Activated CD4-positive, alpha-beta memory T cell treated with anti-CD3 and anti-CD28 coated beads, Interleukin-2, amount 10 ng/mL, durations not matched to agents 7 days and 5 days (primary cell): ENCODE measurements at regions of chr10 and their contacts with region 1.

Region 1: GRCh38 chr10:67697724-67698131 is 1.7 kb upstream of the CTNNA3 start:
- DNase-seq: peak; percentile 18
- H3K4me3 Mint-ChIP-seq: no peak overlapping the region
- H3K27ac Mint-ChIP-seq: no peak overlapping the region
- H3K4me1 Mint-ChIP-seq: peaks cover 12% of the 10 kb centered on the region
- H3K27me3 Mint-ChIP-seq: peaks cover 36% of the 10 kb centered on the region

Region 2: GRCh38 chr10:67492317-67493019 is 205.3 kb before region 1 on chr10:
- CTCF ChIA-PET with region 1: no interaction called
- POLR2A ChIA-PET with region 1: no interaction called
- DNase-seq: no peak
- H3K4me3 Mint-ChIP-seq: no peak overlapping the region
- H3K27ac Mint-ChIP-seq: no peak overlapping the region
- H3K4me1 Mint-ChIP-seq: no peaks in the 10 kb centered on the region
- H3K27me3 Mint-ChIP-seq: no peaks in the 10 kb centered on the region

Region 3: DNA sequence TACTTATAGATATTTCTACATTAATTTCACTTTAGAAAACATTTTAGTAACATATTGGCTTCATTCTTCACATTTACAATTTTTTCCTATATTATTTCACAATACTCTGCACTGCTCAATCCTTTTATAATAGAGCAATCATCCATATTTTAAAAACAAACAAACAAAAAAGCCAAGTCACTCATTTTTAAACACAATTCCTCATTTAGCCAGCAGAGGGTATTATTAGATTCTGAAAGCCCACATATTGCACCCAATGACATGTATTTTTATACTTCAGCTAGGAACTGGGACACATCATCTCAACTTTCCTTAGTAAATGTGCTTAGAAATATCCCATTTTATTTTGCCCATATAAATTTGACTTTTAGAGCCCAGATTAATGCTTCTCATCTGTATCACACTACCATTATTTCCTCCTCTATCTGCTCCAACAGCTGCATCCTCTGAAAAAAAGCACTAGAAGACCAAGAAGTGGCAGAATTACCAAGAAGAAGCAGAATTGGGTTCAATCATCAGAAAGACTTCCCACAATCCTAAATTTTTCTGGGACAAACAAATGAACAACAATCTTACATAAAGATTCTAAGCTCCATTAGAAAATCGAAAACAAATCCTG is 31.2 kb before region 1 on chr10:
- CTCF ChIA-PET with region 1: interaction called, 11 read pairs
- POLR2A ChIA-PET with region 1: interaction called, 3 read pairs
- DNase-seq: no peak
- H3K4me3 Mint-ChIP-seq: no peak overlapping the region
- H3K27ac Mint-ChIP-seq: no peak overlapping the region
- H3K4me1 Mint-ChIP-seq: no peaks in the 10 kb centered on the region
- H3K27me3 Mint-ChIP-seq: no peaks in the 10 kb centered on the region

Region 4: DNA sequence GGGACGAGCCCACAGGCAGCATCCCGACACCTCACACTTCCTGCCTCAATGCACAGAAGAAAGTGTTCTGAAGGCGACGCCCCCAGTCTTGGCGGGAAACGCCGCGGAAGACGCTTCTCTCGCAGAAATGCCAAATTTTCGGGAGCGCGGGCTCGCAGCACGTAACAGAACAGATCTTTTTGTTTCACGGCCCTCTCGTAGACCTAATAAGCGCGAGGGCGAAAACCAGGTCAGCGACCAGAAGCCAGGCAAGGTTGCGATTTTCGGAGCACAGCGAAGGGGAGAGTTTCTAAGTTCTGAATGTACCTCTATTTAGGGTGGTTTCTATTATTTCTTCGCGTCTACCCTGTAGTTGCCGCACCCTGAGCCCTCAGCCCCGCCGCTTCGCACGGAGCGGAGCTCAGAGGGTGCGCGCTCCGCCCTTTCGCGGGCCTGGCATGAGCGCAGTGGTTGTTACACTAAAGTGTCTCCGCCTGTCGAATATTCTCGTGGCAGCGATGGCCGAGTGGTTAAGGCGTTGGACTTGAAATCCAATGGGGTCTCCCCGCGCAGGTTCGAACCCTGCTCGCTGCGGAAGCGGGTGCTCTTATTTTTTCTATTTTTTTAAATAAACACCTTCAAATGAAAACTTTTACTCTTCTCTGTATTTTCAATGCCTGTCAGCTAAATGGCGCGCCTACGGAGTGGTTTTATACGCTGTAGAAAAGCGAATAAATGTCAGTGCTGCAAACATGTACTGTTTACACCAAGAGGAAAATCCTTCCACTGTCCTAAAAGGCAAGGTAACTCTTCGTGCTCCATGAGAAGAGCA is 66.5 kb after region 1 on chr10:
- CTCF ChIA-PET with region 1: interaction called, 13 read pairs
- POLR2A ChIA-PET with region 1: interaction called, 8 read pairs
- DNase-seq: peak; percentile 97
- H3K4me3 Mint-ChIP-seq: peak overlapping the region; percentile 72
- H3K27ac Mint-ChIP-seq: peak overlapping the region; percentile 88
- H3K4me1 Mint-ChIP-seq: peaks cover 21% of the 10 kb centered on the region
- H3K27me3 Mint-ChIP-seq: peaks cover 2% of the 10 kb centered on the region

Region 5: DNA sequence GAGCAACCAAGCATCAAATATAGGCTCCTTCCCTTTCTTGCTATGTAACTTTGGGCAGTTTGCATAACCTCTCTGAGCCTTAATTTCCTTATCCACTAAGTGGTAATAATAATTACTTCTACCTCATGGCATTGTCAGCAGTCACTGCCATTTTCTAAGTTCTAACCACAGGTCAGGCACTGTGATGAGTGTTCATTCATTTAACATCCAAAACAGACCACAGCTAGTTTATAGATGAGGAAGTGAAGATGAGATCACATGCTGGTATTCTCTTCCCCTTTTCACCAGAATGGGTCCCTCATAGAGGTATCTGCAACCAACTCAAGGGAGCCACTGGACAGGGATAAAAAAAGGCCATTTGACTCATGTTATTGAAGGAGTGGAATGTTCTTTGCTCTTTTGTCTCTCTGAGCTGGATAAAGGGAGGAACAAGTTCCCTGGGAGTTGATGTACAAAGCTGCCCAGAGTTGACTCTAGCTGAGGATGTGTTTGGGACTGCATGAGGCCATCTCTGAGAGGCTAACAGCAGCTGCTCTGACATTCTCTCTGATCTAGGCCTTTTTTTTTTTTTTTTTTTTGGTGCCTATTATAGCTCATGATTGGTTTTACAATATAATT is 75.3 kb after region 1 on chr10:
- CTCF ChIA-PET with region 1: interaction called, 179 read pairs
- POLR2A ChIA-PET with region 1: interaction called, 4 read pairs
- DNase-seq: no peak
- H3K4me3 Mint-ChIP-seq: no peak overlapping the region
- H3K27ac Mint-ChIP-seq: no peak overlapping the region
- H3K4me1 Mint-ChIP-seq: peaks cover 48% of the 10 kb centered on the region
- H3K27me3 Mint-ChIP-seq: peaks cover 1% of the 10 kb centered on the region

Region 6: GRCh38 chr10:67779465-67780203 is 81.9 kb after region 1 on chr10:
- CTCF ChIA-PET with region 1: interaction called, 179 read pairs
- POLR2A ChIA-PET with region 1: interaction called, 13 read pairs
- DNase-seq: peak; percentile 73
- H3K4me3 Mint-ChIP-seq: no peak overlapping the region
- H3K27ac Mint-ChIP-seq: no peak overlapping the region
- H3K4me1 Mint-ChIP-seq: peaks cover 35% of the 10 kb centered on the region
- H3K27me3 Mint-ChIP-seq: no peaks in the 10 kb centered on the region